PC-3 (cell line): ENCODE measurements at regions of chr5 and their contacts with region 1.

Region 1: DNA sequence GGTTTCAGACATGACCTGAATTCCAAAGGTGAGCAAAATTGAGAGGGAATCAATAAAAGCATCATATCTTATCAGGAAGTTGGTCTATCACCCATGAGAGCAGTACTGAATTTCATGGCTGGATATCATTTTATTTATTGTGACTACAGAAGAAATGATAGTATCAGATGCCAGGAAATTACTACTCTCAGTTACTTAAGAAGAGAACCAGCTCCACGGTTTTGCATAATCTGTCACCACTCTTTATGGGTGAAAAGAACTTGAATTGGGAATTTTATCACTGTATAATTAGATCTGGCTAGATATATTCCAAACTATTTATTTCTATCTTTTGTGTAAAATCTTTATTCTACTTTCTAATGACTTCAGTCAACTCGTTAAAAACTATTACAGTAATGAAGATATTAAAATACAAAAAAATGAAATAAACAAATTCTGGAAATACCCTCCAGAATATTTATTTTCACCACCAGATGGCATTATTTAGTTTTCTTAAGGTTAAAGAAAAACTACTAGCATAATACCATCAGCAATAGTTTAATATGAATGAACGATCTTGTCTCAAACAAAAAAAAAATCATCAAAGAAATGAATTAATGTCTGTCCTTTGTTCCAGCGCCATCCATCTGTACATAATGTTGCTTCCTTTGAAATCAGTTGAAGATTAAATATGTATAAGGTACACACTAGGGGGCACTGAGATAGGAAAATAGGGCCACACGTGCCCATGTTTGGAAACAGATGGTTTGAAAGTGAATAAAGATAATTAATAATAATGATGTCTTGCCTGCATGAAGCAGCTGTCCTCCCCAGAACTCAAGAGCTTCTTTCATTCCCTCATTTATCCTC is 84.7 kb upstream of the SLCO6A1 start:
- DNase-seq: peak; percentile 74
- ATAC-seq: peak; percentile 58
- H3K4me3 ChIP-seq: peak overlapping the region; percentile 14; the same call in 1 of the 2 replicates
- H3K27ac ChIP-seq: no peak overlapping the region
- H3K4me1 ChIP-seq: peaks cover 6% of the 10 kb centered on the region; the same call in 1 of the 2 replicates
- H3K27me3 ChIP-seq: no peaks in the 10 kb centered on the region
- CTCF ChIP-seq: peak; percentile 98

Region 2: GRCh38 chr5:102627318-102627717 is 43.8 kb after region 1 on chr5:
- CTCF ChIA-PET with region 1: no interaction called
- POLR2A ChIA-PET with region 1: no interaction called
- intact Hi-C with region 1: loop called (anchors 1 kb)
- DNase-seq: peak; percentile 94
- ATAC-seq: peak; percentile 84
- H3K4me3 ChIP-seq: peak overlapping the region; percentile 8; the same call in 1 of the 2 replicates
- H3K27ac ChIP-seq: peak overlapping the region; percentile 49
- H3K4me1 ChIP-seq: peaks cover 65% of the 10 kb centered on the region
- H3K27me3 ChIP-seq: no peaks in the 10 kb centered on the region
- CTCF ChIP-seq: no peak

Region 3: GRCh38 chr5:102638912-102639652 is 55.6 kb after region 1 on chr5:
- CTCF ChIA-PET with region 1: interaction called, 3 read pairs
- POLR2A ChIA-PET with region 1: no interaction called
- intact Hi-C with region 1: loop called (anchors 1 kb)
- DNase-seq: peak; percentile 87
- ATAC-seq: peak; percentile 91
- H3K4me3 ChIP-seq: peak overlapping the region; percentile 3; the same call in 1 of the 2 replicates
- H3K27ac ChIP-seq: peak overlapping the region; percentile 81
- H3K4me1 ChIP-seq: peaks cover 24% of the 10 kb centered on the region
- H3K27me3 ChIP-seq: no peaks in the 10 kb centered on the region
- CTCF ChIP-seq: no peak

Region 4: GRCh38 chr5:102670224-102670836 is 86.8 kb after region 1 on chr5:
- CTCF ChIA-PET with region 1: no interaction called
- POLR2A ChIA-PET with region 1: no interaction called
- intact Hi-C with region 1: loop called (anchors 1 kb)
- DNase-seq: peak; percentile 76
- ATAC-seq: peak; percentile 94
- H3K4me3 ChIP-seq: no peak overlapping the region
- H3K27ac ChIP-seq: no peak overlapping the region
- H3K4me1 ChIP-seq: peaks cover 7% of the 10 kb centered on the region; the same call in 1 of the 2 replicates
- H3K27me3 ChIP-seq: no peaks in the 10 kb centered on the region
- CTCF ChIP-seq: peak; percentile 99

Region 5: DNA sequence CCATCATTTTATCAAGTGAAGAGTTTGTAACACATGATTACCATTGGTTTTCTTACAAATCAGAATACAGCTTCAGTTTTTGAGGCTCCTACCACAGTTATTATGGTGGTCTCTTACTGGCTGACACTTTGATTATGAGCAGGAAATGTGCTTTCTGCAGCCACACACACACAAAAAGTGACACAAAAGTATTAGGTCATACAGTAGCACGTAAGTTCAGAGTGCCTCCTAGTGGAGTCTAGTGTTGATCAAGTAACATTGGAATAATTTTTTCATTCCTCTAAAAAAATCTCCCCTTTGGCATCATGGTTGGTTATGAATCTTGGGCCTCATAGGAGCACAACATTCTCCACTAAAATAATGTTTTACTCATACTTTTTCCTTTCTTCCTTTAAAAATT is 209.2 kb after region 1 on chr5:
- CTCF ChIA-PET with region 1: no interaction called
- POLR2A ChIA-PET with region 1: no interaction called
- intact Hi-C with region 1: loop called (anchors 5 kb)
- DNase-seq: peak; percentile 66
- ATAC-seq: 0 out of 2 replicates have a peak, but pooled peaks have one; percentile 24
- H3K4me3 ChIP-seq: no peak overlapping the region
- H3K27ac ChIP-seq: no peak overlapping the region
- H3K4me1 ChIP-seq: peaks cover 24% of the 10 kb centered on the region
- H3K27me3 ChIP-seq: no peaks in the 10 kb centered on the region
- CTCF ChIP-seq: peak; percentile 92

Region 6: GRCh38 chr5:102971697-102972293 is 388.3 kb after region 1 on chr5:
- CTCF ChIA-PET with region 1: no interaction called
- POLR2A ChIA-PET with region 1: no interaction called
- intact Hi-C with region 1: loop called (anchors 1 kb)
- DNase-seq: peak; percentile 70
- ATAC-seq: peak; percentile 82
- H3K4me3 ChIP-seq: no peak overlapping the region
- H3K27ac ChIP-seq: no peak overlapping the region
- H3K4me1 ChIP-seq: peaks cover 6% of the 10 kb centered on the region; the same call in 1 of the 2 replicates
- H3K27me3 ChIP-seq: no peaks in the 10 kb centered on the region
- CTCF ChIP-seq: peak; percentile 86

Region 7: GRCh38 chr5:103041071-103041676 is 457.7 kb after region 1 on chr5:
- CTCF ChIA-PET with region 1: no interaction called
- POLR2A ChIA-PET with region 1: no interaction called
- intact Hi-C with region 1: loop called (anchors 1 kb)
- DNase-seq: peak; percentile 88
- ATAC-seq: peak; percentile 78
- H3K4me3 ChIP-seq: no peak overlapping the region
- H3K27ac ChIP-seq: no peak overlapping the region
- H3K4me1 ChIP-seq: peaks cover 8% of the 10 kb centered on the region; the same call in 1 of the 2 replicates
- H3K27me3 ChIP-seq: no peaks in the 10 kb centered on the region
- CTCF ChIP-seq: peak; percentile 82